ENCODE measurements at regions of chr13 and their contacts with region 1.

Region 1: DNA sequence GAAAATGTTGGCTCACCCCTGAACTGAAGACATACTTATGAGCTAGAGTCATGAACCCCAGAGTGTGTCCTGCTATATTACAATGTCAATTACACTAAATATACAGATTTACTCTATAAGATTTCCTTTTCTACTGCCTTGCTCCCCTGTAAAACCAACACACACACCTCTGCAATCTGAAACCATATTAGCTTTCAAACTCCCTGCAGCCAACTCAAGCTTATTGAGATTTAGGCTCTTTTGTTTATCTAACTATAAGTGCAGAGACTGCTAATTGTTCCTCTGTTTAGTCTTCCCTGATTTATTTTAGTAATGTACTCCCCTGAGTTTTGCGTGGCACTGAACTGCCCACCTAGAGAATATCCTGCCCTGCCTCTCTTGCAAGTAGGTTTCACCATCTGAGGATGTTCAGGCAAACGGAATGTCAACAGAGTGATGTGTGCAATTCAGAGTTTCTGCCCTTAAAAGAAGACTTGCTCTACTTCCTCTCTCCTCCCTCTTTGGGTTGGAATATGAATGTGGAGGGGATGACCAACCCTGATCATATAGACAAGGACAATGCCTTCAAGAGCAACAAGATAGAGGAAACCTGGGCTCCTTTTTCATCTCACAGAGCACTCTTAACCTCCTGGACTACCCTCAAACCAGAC is 22.3 kb downstream of the FAM216B start:
- DNase-seq: no peak
- H3K4me3 Mint-ChIP-seq: no peak overlapping the region
- H3K27ac Mint-ChIP-seq: no peak overlapping the region
- H3K4me1 Mint-ChIP-seq: peaks cover 6% of the 10 kb centered on the region
- H3K27me3 Mint-ChIP-seq: peaks cover 7% of the 10 kb centered on the region

Region 2: DNA sequence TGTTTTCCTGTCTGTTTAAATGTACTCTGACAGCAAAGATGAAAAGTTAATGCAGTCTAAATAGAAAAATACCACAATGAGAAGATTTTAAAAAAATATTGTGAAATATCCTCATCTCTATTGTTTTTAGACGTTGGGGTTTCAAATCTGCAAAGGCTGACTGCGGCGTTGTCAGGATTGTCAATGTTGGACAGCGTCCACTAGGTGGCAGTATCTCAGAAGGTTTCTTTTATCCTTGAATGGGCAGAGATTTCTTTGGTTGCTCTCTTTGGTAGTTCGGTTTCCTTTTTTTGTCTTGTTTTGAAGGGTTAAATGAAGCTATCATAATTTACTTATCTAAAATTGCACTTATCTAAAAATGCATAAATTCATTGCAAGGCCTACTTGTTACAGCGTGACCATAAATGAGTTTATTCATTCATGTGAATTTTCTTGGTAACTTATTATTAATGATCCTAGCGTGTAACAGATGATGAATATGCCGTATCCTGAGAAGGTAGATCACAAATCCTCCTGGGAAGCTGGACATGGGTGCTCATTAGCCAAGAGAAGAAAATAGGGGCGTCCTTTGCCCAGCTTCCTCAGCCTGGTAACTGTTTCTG is 208.6 kb before region 1 on chr13:
- intact Hi-C with region 1: loop called (anchors 10 kb)
- DNase-seq: peak; percentile 29
- H3K4me3 Mint-ChIP-seq: no peak overlapping the region
- H3K27ac Mint-ChIP-seq: no peak overlapping the region
- H3K4me1 Mint-ChIP-seq: peaks cover 11% of the 10 kb centered on the region
- H3K27me3 Mint-ChIP-seq: no peaks in the 10 kb centered on the region

Region 3: GRCh38 chr13:42875475-42876269 is 72.0 kb after region 1 on chr13:
- intact Hi-C with region 1: loop called (anchors 1 kb)
- DNase-seq: no peak
- H3K4me3 Mint-ChIP-seq: no peak overlapping the region
- H3K27ac Mint-ChIP-seq: no peak overlapping the region
- H3K4me1 Mint-ChIP-seq: peaks cover 18% of the 10 kb centered on the region
- H3K27me3 Mint-ChIP-seq: peaks cover 44% of the 10 kb centered on the region

Region 4: GRCh38 chr13:43030548-43030947 is 226.9 kb after region 1 on chr13:
- intact Hi-C with region 1: no loop called
- DNase-seq: no peak
- H3K4me3 Mint-ChIP-seq: no peak overlapping the region
- H3K27ac Mint-ChIP-seq: no peak overlapping the region
- H3K4me1 Mint-ChIP-seq: peaks cover 13% of the 10 kb centered on the region
- H3K27me3 Mint-ChIP-seq: no peaks in the 10 kb centered on the region

Region 5: DNA sequence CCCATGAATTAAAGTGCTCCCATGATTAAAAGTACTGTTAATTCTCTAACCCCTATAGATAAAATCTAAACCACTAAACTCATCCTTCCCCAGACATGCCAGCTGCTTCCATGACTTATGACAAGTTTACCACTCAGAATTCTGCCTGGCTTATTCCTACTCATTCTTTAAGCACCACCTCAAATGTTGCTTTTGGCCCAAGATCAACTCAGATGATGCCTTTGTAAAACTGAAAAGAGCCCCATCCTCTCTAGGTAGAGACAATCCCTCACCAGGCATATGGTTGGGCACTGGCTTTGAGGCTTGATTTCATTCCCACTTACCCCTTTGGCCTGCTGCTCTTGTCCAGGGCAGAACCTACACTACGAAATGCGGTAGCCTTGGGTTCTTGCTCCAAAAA is 469.7 kb after region 1 on chr13:
- intact Hi-C with region 1: no loop called
- DNase-seq: no peak
- H3K4me3 Mint-ChIP-seq: no peak overlapping the region
- H3K27ac Mint-ChIP-seq: no peak overlapping the region
- H3K4me1 Mint-ChIP-seq: no peaks in the 10 kb centered on the region
- H3K27me3 Mint-ChIP-seq: peaks cover 18% of the 10 kb centered on the region

Measured in activated T-helper 2 cell treated with anti-CD3 and anti-CD28 coated beads, Interferon-gamma antibody, Interleukin-2, Interleukin-4, amounts not matched to agents 10 μg/mL and 5 μg/mL and 100 μg/mL, durations not matched to agents 14 hours and 24 hours and 36 hours (primary cell).